HAP-1 (cell line): ENCODE measurements at regions of chr1 and their contacts with region 1.

Region 1: DNA sequence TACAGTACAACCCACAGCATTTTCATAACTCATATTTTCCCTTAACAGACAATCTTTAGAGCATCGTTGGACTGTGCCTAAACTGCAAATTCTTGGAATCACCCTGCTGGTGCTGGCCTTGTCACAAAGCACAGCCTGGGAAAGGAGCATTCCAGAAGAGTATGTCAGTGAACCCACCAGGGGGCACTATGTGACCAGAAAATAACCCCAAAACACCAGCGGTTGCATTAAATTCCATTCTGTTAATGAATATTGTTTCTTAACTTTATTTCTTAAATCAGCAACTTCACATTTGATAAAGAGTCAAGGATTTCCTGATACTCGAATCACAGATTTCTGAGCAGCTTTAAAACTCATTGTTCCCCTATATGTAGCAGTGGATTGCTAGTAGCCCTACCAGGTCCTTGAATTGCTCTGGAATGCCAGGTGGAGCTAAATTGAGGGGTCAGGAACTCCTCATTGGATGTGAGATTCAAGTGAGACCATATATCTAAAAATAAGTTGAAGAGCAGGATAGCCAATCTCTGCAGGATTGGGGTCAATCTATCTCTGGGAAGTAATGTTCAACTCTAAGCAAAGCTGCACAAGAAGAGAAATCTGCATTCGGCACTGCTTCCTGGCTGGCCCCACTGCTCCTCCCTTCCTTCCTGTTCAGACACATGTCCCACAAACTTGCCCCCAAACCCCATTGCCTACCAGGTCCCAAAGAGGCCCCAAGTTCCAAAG is 12.7 kb upstream of the RAB4A start:
- DNase-seq: peak; percentile 63 to 77
- H3K4me3 ChIP-seq: no peak overlapping the region
- H3K4me1 ChIP-seq: no peaks in the 10 kb centered on the region
- H3K27me3 ChIP-seq: no peaks in the 10 kb centered on the region

Region 2: DNA sequence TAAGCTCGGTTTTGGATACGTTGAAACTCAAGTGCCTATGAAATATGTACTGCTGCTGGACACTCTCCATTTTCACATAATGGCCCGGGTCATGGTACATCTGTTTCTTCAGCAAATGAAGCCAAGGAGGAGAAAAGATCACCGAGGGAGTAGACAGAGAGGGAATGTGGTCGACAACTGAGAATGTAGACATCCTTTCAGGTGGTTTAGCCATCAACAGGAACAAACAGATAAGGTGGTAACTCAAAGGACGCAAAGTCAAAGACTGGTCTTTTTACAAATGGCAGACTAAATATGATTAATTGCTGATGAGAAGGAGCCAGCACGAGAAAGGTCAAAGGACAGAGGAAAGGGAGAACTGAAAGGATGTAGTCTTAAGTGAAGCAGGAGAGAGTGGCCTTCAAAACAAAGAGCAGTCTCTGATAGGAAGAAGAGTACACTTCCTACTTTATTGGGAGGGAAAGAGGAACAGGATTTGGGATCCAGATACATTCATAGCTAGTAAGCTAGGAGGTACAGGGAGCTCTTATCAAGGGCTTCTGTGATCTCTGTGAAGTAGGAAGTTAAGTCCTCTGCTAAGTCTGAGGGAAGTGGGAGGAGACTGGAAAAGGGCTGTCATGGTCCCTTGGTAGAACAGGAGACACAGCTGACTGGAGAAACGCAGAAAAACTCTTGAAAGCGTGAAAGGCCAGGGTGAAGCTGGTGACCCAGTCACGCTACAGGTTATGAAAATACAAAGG is 221.6 kb after region 1 on chr1:
- in situ Hi-C with region 1: loop called (anchors 10 kb)
- DNase-seq: no peak
- H3K4me3 ChIP-seq: no peak overlapping the region
- H3K4me1 ChIP-seq: peaks cover 1% of the 10 kb centered on the region
- H3K27me3 ChIP-seq: no peaks in the 10 kb centered on the region

Region 3: DNA sequence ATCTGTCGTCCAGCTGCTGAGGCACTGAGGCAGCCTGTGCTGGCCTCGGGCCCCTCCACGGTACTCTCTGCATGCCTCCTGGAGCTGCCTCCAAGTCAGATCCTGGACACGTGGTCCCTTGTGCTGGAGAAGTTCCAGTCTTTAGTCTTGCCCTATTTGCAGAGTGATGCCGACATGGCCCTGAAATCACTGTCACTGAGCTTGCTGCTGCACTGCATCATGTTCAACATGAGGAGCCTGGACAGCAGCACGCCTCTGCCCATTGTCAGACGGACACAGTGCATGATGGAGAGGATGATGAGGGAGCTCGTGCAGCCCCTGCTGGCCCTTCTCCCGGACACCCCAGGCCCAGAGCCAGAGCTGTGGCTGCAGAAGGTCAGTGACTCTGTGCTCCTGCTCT is 377.8 kb after region 1 on chr1:
- in situ Hi-C with region 1: no loop called
- DNase-seq: no peak
- H3K4me3 ChIP-seq: no peak overlapping the region
- H3K4me1 ChIP-seq: no peaks in the 10 kb centered on the region
- H3K27me3 ChIP-seq: no peaks in the 10 kb centered on the region